ENCODE measurements at regions of chr3 and their contacts with region 1.

Region 1: DNA sequence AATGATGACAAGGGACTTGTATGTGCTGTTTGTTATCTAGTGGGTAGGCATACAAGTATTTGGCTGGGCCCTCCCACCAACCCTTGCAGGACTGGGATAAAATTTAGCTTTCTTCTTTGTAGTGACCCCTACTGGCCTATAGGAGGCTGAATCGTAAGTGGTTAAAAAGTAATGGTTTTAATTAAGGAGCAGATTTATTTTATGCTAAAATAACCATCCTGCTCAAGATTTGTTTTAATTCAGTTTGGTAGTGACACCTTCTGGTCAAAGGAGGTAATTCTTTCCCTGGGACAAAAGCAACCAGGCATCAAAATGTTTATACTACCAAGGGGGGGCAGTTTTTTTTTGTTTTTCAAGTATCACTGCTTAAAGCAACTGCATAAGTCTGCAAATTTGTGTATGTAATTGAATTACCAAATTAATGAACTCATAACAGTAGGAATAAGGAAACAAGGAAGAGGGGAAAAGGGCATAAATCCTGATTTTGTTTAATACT is 70.7 kb downstream of the TOP2B start:
- DNase-seq: no peak
- ATAC-seq: peak; percentile 71

Region 2: DNA sequence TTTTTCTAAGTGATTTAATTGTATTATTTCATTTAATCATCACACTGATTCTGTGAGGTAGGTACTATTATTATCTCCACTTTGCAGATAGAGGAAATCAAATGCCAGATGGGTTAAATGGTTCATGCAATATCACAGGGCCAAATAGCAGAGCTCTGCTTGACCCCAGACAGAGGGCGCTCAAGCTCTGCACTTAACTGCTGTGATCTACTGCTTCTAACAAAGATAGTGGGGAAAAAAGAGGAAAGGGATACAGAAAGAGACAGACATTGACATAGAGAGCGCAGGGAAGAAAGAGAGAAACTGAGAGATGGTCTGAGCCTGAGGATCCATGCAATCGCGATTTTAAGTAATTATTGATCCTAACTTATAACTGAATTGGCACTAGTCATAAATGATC is 820.3 kb before region 1 on chr3:
- intact Hi-C with region 1: loop called (anchors 2 kb)
- DNase-seq: no peak
- ATAC-seq: peak; percentile 73

Region 3: GRCh38 chr3:24963762-24964625 is 630.1 kb before region 1 on chr3:
- intact Hi-C with region 1: loop called (anchors 2 kb)
- DNase-seq: no peak
- ATAC-seq: no peak

Region 4: GRCh38 chr3:25021816-25022215 is 572.2 kb before region 1 on chr3:
- intact Hi-C with region 1: loop called (anchors 2 kb)
- DNase-seq: no peak
- ATAC-seq: peak; percentile 54

Region 5: GRCh38 chr3:25171118-25171807 is 422.8 kb before region 1 on chr3:
- intact Hi-C with region 1: loop called (anchors 10 kb)
- DNase-seq: no peak
- ATAC-seq: no peak

Region 6: GRCh38 chr3:25324954-25325655 is 268.9 kb before region 1 on chr3:
- intact Hi-C with region 1: loop called (anchors 10 kb)
- DNase-seq: no peak
- ATAC-seq: peak; percentile 69

Region 7: DNA sequence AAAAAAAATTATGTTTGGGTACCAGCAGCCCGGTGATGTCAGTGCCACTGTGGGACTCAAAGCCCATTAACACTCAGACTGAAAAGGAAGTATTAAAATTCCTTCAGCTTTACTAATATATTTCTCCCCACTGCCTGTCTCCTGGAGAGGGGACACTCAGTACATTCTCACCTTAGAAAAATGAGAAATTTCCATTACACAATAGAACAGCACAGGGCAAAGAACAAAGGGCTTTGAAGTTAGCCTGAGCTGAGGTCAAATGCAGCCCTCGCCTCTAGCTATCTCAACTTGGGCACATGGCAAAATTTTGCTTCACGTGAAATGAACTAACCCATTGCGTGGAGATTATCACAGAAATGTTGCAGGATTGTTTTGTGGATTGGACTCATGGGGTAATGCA is 85.2 kb before region 1 on chr3:
- intact Hi-C with region 1: loop called (anchors 5 kb)
- DNase-seq: no peak
- ATAC-seq: no peak

Region 8: DNA sequence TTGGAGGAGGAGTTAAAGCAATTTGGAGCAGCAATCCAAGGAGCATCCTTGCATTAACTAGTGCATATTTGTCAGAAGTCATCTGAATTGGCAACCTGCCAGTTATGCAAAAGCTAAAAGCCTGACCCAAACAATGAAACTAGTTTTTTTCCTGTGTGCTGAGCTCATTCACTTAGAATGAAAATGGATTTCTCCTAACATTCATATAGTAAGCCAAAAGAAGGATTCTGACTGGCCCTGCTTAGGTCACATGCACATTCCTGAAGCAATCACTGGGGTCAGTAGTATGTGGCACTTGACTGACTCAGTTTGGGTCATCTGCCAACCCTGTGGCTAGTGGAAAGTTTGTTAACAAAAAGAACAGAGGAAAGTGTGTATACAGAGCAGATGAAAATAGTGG is 226.3 kb after region 1 on chr3:
- intact Hi-C with region 1: no loop called
- DNase-seq: no peak
- ATAC-seq: peak; percentile 13